ENCODE measurements at regions of chr22 and their contacts with region 1.

Region 1: GRCh38 chr22:38569972-38570778 is at the start of gene DMC1:
- DNase-seq: peak; percentile 95
- total RNA-seq, gene DMC1: 1.9 TPM

Region 2: DNA sequence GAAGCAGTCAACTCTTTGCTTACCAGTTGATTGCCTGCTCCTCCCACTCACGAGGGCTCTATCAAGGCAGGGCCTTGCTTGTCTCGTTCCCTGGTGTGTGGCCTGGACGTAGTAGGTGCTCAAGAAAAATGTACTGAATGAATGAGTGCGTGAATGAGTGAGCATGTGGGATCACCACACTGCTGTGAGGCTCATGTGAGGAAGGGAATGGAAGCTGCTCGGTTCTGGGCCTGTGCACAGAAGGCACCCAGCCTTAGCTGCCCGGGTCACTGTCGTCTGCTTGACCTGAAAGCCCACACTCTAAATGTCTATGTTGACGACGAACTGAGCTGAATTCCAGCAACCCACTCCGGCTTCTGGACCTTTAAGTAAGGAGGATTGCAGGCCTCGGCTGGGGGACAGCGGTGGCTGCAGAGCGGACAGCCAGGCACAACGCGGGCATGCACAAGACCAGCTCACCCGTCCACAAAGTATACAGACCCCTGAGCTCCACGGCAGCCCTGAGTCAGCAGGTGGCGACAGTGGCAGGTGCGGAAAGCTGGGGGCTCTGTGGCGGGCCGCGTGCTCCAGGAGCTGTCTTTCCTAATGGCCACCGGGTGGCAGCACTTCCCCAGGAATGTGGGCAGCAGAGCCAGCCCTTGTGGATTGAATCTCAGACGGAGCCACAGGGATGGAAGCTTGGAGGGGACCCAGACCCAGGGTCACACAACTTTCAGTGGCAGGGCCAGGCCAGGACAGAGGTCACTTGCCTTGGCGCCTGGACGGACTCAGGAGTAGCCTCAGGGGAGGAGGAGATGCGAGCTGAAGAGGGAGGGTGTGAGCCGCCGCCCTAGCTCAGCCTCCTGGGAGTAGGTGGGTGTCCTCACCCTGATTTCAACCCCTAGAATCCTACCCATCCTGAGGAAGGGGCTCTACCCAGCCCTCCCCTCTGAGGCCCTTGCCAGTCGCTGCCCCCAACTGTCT is 518.0 kb before region 1 on chr22:
- intact Hi-C with region 1: loop called (anchors 5 kb)
- DNase-seq: peak; percentile 91

Region 3: DNA sequence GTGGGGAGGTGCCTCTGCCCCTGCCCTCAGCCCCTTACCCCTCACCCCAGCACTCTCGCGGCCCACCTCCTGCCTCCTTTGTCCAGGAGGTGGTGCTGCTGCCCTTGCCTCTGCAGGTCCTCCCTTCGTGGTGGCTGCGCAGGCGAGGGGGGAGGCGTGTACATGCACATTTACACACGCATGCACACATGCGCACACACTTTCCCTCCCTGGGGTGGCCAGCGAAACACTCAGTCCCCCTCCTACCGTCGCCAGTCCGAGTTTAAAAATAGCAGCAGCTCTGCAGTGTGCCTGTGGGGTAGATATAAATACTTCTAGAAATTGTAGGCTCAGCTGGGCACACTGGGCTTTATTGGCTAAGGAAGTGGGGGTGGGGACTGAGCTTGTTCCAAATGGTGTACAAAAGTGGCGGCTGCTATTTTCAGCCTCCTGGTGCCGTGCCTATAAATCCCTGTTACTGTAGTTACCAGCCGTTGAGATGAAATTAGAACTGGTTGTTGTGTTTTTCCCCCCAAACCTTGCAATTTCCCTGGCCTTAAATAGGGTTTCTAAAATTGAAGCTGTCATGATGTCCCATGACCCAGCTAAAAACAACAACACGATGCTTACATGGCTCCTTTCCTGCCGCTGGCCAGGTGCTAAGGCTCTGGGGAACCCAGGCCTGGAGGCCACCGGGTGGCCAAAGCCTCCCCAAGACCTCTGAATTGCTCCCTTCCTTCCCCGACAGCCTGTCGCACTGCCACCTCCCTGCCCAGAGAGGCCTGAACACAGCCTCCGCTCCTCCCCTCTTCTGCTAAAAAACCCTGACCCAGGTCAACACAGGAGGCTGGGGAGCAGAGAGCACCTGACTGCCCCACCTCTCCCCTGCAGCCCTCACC is 500.6 kb before region 1 on chr22:
- intact Hi-C with region 1: loop called (anchors 5 kb)
- DNase-seq: peak; percentile 87

Region 4: GRCh38 chr22:38412435-38413084 is 157.6 kb before region 1 on chr22:
- intact Hi-C with region 1: loop called (anchors 5 kb)
- DNase-seq: peak; percentile 75

Region 5: GRCh38 chr22:38461414-38462081 is 108.6 kb before region 1 on chr22:
- intact Hi-C with region 1: loop called (anchors 5 kb)
- DNase-seq: peak; percentile 91

Region 6: GRCh38 chr22:38506118-38506962 is 63.8 kb before region 1 on chr22 and contains the start of gene DDX17:
- intact Hi-C with region 1: loop called (anchors 1 kb)
- DNase-seq: peak; percentile 97
- total RNA-seq, gene DDX17: 215 TPM

Region 7: GRCh38 chr22:38751422-38752346 is 181.5 kb after region 1 on chr22:
- intact Hi-C with region 1: no loop called
- DNase-seq: peak; percentile 91